Heart right ventricle (tissue), 16 donors: ENCODE measurements at regions of chr7 and their contacts with region 1.

Region 1: GRCh38 chr7:54960517-54960916 is 58.3 kb upstream of the EGFR start:
- DNase-seq: no peak
- ATAC-seq: no peak
- H3K4me3 ChIP-seq: no peak overlapping the region
- H3K27ac ChIP-seq: no peak overlapping the region
- H3K4me1 ChIP-seq: no peaks in the 10 kb centered on the region
- H3K27me3 ChIP-seq: peaks cover 0 to 16% (median 6%) of the 10 kb centered on the region in 7 donors
- CTCF ChIP-seq: no peak

Region 2: GRCh38 chr7:55005241-55005851 is 44.8 kb after region 1 on chr7:
- intact Hi-C with region 1: no loop called
- DNase-seq: no peak
- ATAC-seq: no peak
- H3K4me3 ChIP-seq: no peak overlapping the region
- H3K27ac ChIP-seq: no peak overlapping the region
- H3K4me1 ChIP-seq: no peaks in the 10 kb centered on the region
- H3K27me3 ChIP-seq: peaks cover 0 to 46% (median 25%) of the 10 kb centered on the region in 7 donors
- CTCF ChIP-seq: no peak

Region 3: GRCh38 chr7:55245271-55245723 is 284.8 kb after region 1 on chr7:
- intact Hi-C with region 1: loop called in 1 of 10 experiments (anchors 1 kb)
- DNase-seq: no peak
- ATAC-seq: peak in 2 of 8 donors; percentile 37 to 51
- H3K4me3 ChIP-seq: no peak overlapping the region
- H3K27ac ChIP-seq: no peak overlapping the region
- H3K4me1 ChIP-seq: no peaks in the 10 kb centered on the region
- H3K27me3 ChIP-seq: peaks cover 0 to 3% (median 0%) of the 10 kb centered on the region in 7 donors
- CTCF ChIP-seq: no peak